GM12878 (cell line): ENCODE measurements at regions of chr18 and their contacts with region 1.

Region 1: DNA sequence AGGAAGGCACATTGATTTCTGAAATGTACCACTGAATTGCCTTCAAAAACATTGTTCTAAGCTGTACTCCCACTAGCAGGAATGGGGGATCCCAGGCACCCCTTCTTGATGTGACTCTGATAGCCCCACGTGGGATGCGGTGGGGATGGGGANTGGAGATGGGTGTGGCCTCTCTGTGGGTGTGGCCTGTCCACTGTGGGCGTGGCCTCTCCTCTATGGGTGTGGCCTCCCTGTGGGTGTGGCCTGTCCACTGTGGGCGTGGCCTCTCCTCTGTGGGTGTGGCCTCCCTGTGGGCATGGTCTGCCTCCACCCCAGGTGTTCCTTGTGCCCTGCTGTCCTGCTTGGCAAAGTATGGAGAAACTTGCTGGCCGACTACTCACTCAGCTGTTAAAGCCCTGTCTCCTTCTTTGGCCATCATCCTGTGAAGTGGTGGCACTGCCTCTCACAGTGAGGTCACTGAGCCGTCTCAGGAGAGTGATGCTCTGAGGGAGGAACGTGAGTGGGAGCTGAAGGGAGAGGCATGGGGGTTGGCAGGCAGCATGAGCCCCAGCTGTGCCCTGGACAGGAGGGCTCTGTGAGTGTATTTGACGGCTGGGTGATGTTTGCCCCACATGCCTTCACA is 6.7 kb upstream of the PARD6G start:
- DNase-seq: no peak
- ATAC-seq: peak; percentile 87
- H3K4me3 ChIP-seq: no peak overlapping the region
- H3K27ac ChIP-seq: no peak overlapping the region
- H3K4me1 ChIP-seq: no peaks in the 10 kb centered on the region
- H3K27me3 ChIP-seq: peaks cover 0 to 2% of the 10 kb centered on the region in 2 experiments; a peak in 1 of 4 replicates
- CTCF ChIP-seq: no peak
- EP300 ChIP-seq: no peak
- POLR2A ChIP-seq: no peak
- RAD21 ChIP-seq: no peak

Region 2: GRCh38 chr18:79944126-79944741 is 309.7 kb before region 1 on chr18:
- CTCF ChIA-PET with region 1: no interaction called
- POLR2A ChIA-PET with region 1: no interaction called
- RAD21 ChIA-PET with region 1: no interaction called
- SMC1A ChIA-PET with region 1: no interaction called
- in situ Hi-C with region 1: no loop called
- intact Hi-C with region 1: no loop called
- DNase-seq: no peak
- ATAC-seq: peak; percentile 72
- H3K4me3 ChIP-seq: no peak overlapping the region
- H3K27ac ChIP-seq: peak overlapping the region; percentile 17
- H3K4me1 ChIP-seq: peaks cover 34% of the 10 kb centered on the region
- H3K27me3 ChIP-seq: no peaks in the 10 kb centered on the region
- CTCF ChIP-seq: no peak
- EP300 ChIP-seq: no peak
- POLR2A ChIP-seq: no peak
- RAD21 ChIP-seq: no peak

Region 3: DNA sequence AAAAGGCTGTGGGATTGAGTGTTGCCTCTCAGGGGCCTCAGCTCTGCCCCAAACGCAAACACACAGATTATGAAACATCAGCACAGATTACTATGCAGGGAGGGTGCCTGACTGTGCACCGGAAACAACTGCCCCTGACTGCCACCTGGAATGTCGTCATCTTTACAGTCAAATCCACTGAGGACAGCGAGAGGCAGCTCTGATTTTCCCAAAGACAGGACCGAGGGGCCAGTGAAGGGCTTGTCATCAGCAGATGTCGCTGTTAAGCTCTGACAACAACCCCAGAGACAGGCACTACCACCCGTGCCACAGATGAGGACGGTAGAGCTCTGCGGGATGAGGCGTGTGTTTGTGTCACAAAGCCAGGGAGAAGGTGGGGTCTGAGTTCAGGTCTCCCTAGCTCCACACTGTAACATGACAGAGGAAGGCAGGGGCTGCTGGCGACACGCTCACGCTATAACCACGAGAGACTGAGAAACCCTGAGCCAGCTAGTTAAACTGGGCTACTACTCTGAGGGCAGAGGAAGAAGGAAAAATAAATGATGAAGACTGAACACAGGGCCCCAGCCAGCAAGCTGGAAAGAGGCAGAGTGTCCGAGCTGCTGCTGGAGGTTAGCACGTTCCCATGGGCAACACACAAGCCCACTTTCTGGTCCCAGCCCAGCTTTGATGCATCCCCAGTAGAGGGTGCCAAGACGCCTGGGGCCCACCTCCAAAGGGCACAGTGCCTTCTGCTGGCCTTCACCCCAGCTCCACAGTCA is 53.6 kb before region 1 on chr18:
- CTCF ChIA-PET with region 1: interaction called, 22 read pairs
- POLR2A ChIA-PET with region 1: no interaction called
- RAD21 ChIA-PET with region 1: interaction called, 8 read pairs
- SMC1A ChIA-PET with region 1: interaction called, 8 read pairs
- in situ Hi-C with region 1: no loop called
- intact Hi-C with region 1: no loop called
- DNase-seq: no peak
- ATAC-seq: no peak
- H3K4me3 ChIP-seq: no peak overlapping the region
- H3K27ac ChIP-seq: no peak overlapping the region
- H3K4me1 ChIP-seq: peaks cover 27% of the 10 kb centered on the region
- H3K27me3 ChIP-seq: no peaks in the 10 kb centered on the region
- CTCF ChIP-seq: peak in 1 of 3 experiments; percentile 41; a peak in 1 of 6 replicates
- EP300 ChIP-seq: no peak
- POLR2A ChIP-seq: no peak
- RAD21 ChIP-seq: peak; percentile 63

Region 4: GRCh38 chr18:80238651-80239260 is 15.2 kb before region 1 on chr18:
- CTCF ChIA-PET with region 1: interaction called, 5 read pairs
- POLR2A ChIA-PET with region 1: no interaction called
- RAD21 ChIA-PET with region 1: no interaction called
- SMC1A ChIA-PET with region 1: interaction called, 11 read pairs
- in situ Hi-C with region 1: no loop called
- intact Hi-C with region 1: no loop called
- DNase-seq: no peak
- ATAC-seq: no peak; the same call in 2 of the 3 replicates
- H3K4me3 ChIP-seq: no peak overlapping the region
- H3K27ac ChIP-seq: no peak overlapping the region
- H3K4me1 ChIP-seq: no peaks in the 10 kb centered on the region
- H3K27me3 ChIP-seq: no peaks in the 10 kb centered on the region
- CTCF ChIP-seq: no peak
- EP300 ChIP-seq: no peak
- POLR2A ChIP-seq: no peak
- RAD21 ChIP-seq: no peak